Right lobe of liver (tissue), 6 donors: ENCODE measurements at regions of chr18 and their contacts with region 1.

Region 1: GRCh38 chr18:59823596-59824195 is 76.1 kb upstream of the PMAIP1 start:
- DNase-seq: peak in 2 of 3 donors; percentile 47 to 78
- ATAC-seq: peak; percentile 88 to 100 (median 97)
- H3K4me3 ChIP-seq: no peak overlapping the region
- H3K27ac ChIP-seq: no peak overlapping the region
- H3K4me1 ChIP-seq: no peaks in the 10 kb centered on the region
- H3K27me3 ChIP-seq: no peaks in the 10 kb centered on the region
- CTCF ChIP-seq: peak; percentile 68 to 82 (median 73)
- POLR2A ChIP-seq: no peak

Region 2: DNA sequence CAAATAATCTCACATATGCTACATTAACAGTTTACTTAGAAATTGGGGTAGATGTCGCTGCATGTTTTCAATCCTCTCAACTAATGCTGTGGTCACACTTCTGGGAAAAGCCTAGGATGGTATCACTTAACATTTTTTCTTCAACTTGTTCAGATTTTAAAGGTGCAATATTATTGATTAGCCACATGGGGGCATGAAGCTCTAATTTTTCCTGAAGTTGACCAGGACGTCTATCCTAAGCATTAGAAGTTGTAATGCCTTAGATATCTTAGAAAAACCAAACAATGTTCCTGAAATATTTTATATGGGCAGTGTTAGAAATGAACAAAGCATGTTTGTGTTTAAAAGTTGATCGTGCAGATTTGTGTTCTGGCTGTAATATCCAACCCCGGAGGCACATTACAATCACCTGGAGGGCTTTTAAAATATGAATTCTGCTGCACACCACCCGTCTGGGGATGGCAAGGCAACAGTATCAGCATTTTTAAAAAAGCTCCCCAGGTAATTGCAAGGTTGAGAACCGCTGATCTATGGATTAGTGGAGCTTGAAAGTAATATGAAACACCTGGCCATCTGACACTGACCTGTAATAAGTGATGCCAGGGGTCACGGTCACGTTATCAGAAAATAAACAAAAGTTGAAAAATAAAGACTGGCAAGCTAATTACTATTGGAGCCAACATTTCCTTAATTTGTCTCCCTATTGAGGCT is 364.2 kb before region 1 on chr18:
- intact Hi-C with region 1: loop called in 1 of 2 experiments (anchors 5 kb)
- DNase-seq: no peak
- ATAC-seq: peak; percentile 69 to 83 (median 75)
- H3K4me3 ChIP-seq: no peak overlapping the region
- H3K27ac ChIP-seq: no peak overlapping the region
- H3K4me1 ChIP-seq: peaks cover 0 to 10% (median 9%) of the 10 kb centered on the region in 4 donors
- H3K27me3 ChIP-seq: no peaks in the 10 kb centered on the region
- CTCF ChIP-seq: peak; percentile 54 to 71 (median 56)
- POLR2A ChIP-seq: no peak